Activated T-helper 2 cell treated with anti-CD3 and anti-CD28 coated beads, Interferon-gamma antibody, Interleukin-2, Interleukin-4, amounts not matched to agents 10 μg/mL and 5 μg/mL and 100 μg/mL, durations not matched to agents 14 hours and 24 hours and 36 hours (primary cell): ENCODE measurements at regions of chr2 and their contacts with region 1.

Region 1: DNA sequence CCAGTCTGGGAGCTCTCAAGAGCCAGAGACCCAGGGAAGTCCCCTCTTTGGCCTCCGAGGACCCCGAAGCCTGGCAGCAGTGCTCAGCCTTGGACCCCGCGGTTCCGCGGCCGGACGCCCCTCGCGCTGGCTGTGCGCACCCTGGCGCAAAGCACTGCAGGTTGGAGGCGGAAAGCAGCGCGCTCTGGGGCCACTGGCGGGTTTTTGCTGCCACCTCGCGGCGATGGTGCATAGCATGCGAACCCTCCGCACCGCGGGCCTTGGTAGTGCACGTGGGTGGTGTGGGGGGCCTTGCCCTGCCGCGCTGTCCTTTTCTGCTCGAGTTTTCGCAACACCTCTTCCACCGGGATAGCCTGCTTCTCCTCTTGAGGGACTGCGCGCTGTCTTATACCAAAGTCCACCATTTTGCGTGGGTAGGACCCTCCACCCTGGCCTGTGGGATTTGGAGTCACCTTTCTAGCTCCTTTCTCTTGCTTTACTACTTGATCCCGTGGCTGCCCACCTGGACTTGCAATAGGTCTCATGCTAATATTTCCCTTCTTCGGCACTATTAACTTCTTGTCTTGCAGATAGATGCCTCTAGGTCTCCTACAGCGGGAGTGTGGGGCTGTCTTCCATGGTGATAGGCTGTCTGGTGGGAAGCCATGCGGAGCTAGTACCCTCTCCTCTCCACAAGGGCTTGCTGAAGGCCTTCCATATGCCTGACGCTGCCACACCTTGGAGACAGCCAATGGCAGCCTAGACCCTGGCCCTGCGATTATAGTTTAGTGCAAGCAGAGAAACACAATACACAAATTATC is 14.3 kb downstream of the SIX3 start:
- DNase-seq: peak; percentile 70
- H3K4me3 Mint-ChIP-seq: no peak overlapping the region
- H3K27ac Mint-ChIP-seq: no peak overlapping the region
- H3K4me1 Mint-ChIP-seq: peaks cover 14% of the 10 kb centered on the region
- H3K27me3 Mint-ChIP-seq: peaks cover 62% of the 10 kb centered on the region

Region 2: GRCh38 chr2:44044281-44044720 is 911.5 kb before region 1 on chr2:
- intact Hi-C with region 1: loop called (anchors 10 kb)
- DNase-seq: peak; percentile 73
- H3K4me3 Mint-ChIP-seq: no peak overlapping the region
- H3K27ac Mint-ChIP-seq: no peak overlapping the region
- H3K4me1 Mint-ChIP-seq: no peaks in the 10 kb centered on the region
- H3K27me3 Mint-ChIP-seq: peaks cover 7% of the 10 kb centered on the region

Region 3: GRCh38 chr2:44244129-44244871 is 711.5 kb before region 1 on chr2:
- intact Hi-C with region 1: loop called (anchors 5 kb)
- DNase-seq: peak; percentile 36
- H3K4me3 Mint-ChIP-seq: peak overlapping the region; percentile 55
- H3K27ac Mint-ChIP-seq: no peak overlapping the region
- H3K4me1 Mint-ChIP-seq: peaks cover 5% of the 10 kb centered on the region
- H3K27me3 Mint-ChIP-seq: no peaks in the 10 kb centered on the region

Region 4: DNA sequence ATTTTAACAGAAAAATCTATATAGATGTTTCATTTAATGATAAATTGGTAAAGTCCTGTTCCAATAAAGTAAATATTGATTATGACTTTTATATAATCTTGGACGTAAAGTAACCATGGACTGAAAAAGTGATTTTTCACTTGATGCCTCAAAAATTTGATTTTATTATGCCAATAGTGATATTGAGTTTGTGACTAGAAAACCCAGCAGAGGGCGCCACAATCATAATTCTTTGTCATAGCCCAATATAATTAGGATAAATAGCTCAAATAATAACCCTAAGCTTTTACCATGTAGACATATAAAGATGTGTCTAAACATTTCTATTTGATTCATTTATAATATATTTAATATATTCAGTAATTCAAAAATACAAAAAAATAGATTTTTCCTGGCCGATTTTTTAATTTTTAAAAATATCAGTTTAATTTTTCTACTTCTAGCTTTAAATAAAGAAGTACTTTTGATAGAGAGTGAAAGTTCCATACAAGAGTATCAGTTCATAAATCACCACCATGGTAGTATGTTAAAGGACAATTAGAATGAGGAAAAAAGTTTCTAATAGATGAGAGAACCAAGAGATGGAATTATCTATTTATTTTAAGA is 563.4 kb before region 1 on chr2:
- intact Hi-C with region 1: loop called (anchors 5 kb)
- DNase-seq: no peak
- H3K4me3 Mint-ChIP-seq: no peak overlapping the region
- H3K27ac Mint-ChIP-seq: no peak overlapping the region
- H3K4me1 Mint-ChIP-seq: no peaks in the 10 kb centered on the region
- H3K27me3 Mint-ChIP-seq: no peaks in the 10 kb centered on the region

Region 5: DNA sequence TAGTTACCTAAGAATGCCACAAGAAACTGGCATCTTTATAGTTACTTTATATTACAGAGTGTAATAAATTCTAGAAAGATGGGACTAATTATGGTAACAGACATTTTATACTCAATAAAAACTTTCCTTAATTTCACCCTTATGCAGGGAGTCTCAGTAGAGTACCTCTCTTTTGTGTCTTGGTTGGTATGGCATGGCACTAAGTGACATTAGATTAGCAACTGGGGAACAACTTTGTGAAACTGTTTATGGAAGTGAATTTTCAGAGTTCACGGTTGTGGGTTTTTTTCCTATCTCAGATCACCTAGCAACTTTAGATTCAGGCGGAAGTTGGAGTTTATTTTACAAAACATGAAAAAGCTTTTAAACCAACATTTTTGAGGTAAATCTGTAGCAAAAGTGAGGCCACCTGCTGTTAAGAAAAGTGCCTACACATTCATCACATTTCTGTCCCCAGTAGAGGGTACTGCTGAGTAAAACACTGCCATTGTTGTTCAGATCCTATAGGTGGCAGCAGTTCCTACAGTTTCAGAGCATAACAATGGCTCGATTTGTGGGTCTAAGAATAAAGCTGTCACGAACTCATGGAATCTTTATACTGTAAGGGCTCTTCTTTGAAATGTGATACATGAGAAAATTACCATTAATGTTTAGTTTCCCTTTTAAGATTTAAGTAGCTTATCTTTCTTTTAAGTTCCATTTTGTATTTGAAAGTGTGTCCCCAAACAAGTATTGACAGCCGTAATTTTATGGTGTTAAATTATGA is 476.5 kb before region 1 on chr2:
- intact Hi-C with region 1: loop called (anchors 1 kb)
- DNase-seq: peak; percentile 29
- H3K4me3 Mint-ChIP-seq: no peak overlapping the region
- H3K27ac Mint-ChIP-seq: no peak overlapping the region
- H3K4me1 Mint-ChIP-seq: peaks cover 4% of the 10 kb centered on the region
- H3K27me3 Mint-ChIP-seq: no peaks in the 10 kb centered on the region

Region 6: DNA sequence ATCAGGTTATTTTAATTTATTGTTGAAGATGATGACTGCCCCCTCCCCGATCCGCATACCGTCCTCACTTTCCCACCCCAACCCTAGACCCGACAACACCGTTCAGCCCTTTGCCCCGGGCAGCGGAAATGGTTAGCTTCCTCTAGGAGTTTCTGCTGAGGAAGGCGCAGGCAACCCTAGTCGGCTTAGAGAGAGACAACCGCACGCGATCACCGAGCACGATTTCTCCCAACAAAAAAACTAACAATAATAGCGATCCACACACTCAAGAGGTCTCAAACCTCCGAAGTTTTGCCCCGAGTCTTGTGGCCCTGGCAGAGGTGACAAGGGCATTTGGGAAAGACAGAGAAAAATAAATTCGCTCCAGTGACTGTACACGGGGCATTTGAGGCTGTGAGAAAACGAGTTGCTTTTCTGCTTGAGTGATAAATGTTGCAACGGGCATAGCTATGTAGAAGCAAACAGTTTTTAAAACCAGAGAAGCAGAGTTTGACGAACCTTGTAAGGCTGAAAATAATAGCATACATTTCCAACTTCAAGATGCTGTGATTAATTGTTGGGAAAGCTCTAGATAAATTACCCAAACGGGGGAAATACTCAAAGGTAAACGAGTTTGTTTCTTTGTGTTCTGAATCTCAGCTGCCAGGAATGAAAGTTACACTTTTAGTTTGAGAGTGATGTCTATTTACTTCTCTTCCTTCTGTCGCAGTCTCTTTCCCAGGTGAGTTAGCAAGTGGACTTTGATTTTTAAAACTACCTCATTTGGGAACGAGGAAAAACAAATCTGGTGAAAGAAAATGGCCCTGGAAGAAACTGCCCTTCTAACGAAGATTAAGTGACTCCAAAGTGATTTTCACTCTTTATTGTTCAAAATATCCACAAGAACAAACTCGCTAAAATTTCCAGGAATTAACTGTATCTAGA is 25.3 kb before region 1 on chr2:
- intact Hi-C with region 1: loop called (anchors 2 kb)
- DNase-seq: no peak
- H3K4me3 Mint-ChIP-seq: no peak overlapping the region
- H3K27ac Mint-ChIP-seq: no peak overlapping the region
- H3K4me1 Mint-ChIP-seq: peaks cover 8% of the 10 kb centered on the region
- H3K27me3 Mint-ChIP-seq: peaks cover 77% of the 10 kb centered on the region

Region 7: DNA sequence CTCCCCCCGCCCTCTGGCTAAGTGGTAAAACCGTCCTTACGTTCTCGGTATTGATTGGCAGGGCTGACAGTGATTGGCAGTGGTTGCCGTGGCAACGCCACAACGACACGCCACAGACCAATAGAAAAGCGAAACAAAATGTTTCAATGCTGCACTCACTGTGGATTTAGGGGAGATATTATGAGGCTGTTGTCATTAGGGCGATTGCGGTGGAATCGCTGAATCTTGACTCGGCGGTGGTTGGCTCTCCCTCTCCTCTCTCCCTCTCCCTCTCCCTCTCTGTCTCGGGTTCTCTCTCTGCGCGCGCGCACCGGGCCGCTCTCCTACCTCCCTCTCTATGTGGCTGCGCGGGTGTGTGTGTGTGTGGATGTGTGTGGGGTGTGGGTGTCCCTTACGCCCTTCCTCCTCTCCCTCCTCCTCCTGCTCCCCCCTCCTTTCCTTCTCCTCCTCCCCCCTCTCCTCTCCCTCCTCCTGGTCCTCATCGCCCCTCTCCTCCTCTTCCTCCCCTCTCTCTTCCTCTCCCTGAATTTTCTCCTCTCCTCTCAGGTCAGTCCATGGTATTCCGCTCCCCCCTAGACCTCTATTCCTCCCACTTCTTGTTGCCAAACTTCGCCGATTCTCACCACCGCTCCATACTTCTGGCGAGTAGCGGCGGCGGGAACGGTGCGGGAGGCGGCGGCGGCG is 14.1 kb before region 1 on chr2 and contains the start of gene SIX3:
- intact Hi-C with region 1: no loop called
- DNase-seq: peak; percentile 60
- H3K4me3 Mint-ChIP-seq: peak within 1 kb of the TSS; percentile 73
- H3K27ac Mint-ChIP-seq: peak within 1 kb of the TSS; percentile 26
- H3K4me1 Mint-ChIP-seq: peaks cover 22% of the 10 kb centered on the region
- H3K27me3 Mint-ChIP-seq: peaks cover 80% of the 10 kb centered on the region
- total RNA-seq, gene SIX3: 0.25 and 0.34 TPM in 2 replicates

Region 8: GRCh38 chr2:44997963-44998362 is 42.2 kb after region 1 on chr2:
- intact Hi-C with region 1: no loop called
- DNase-seq: no peak
- H3K4me3 Mint-ChIP-seq: no peak overlapping the region
- H3K27ac Mint-ChIP-seq: no peak overlapping the region
- H3K4me1 Mint-ChIP-seq: peaks cover 3% of the 10 kb centered on the region
- H3K27me3 Mint-ChIP-seq: peaks cover 74% of the 10 kb centered on the region